Posterior vena cava (tissue), 2 donors: ENCODE measurements at regions of chr5 and their contacts with region 1.

Region 1: GRCh38 chr5:4013106-4013898 is 417.7 kb downstream of the IRX1 start:
- DNase-seq: no peak

Region 2: DNA sequence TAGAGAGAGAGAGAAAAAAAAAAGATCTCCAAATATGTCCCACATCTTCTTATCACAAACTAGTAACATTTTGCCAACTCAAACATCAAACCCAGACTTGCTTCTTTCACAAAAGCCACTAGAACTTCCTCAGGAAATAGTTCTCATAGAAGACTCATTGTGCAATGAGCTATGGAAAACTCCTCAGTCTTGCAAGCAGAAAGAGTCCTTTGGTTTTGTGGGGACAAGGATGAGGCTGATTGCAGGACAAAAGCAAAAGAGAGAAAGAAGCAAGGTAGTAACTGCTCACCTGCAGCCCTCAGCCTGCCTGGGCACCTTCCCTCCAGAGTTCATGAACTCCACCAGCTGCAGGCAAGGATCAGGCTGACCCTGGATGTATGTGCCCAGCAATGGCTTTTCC is 18.7 kb before region 1 on chr5:
- intact Hi-C with region 1: no loop called
- DNase-seq: no peak

Region 3: GRCh38 chr5:4058899-4059298 is 45.6 kb after region 1 on chr5:
- intact Hi-C with region 1: loop called in 1 of 2 experiments (anchors 1 kb)
- DNase-seq: peak; percentile 86